Mammary epithelial cell (primary cell): ENCODE measurements at regions of chr3 and their contacts with region 1.

Region 1: GRCh38 chr3:182618085-182618732 is 175.1 kb upstream of the ATP11B start:
- DNase-seq: peak; percentile 57
- H3K4me3 ChIP-seq: no peak overlapping the region
- H3K27ac ChIP-seq: peak overlapping the region; percentile 81
- H3K4me1 ChIP-seq: peaks cover 18% of the 10 kb centered on the region
- H3K27me3 ChIP-seq: no peaks in the 10 kb centered on the region
- CTCF ChIP-seq: peak; percentile 70 to 74

Region 2: DNA sequence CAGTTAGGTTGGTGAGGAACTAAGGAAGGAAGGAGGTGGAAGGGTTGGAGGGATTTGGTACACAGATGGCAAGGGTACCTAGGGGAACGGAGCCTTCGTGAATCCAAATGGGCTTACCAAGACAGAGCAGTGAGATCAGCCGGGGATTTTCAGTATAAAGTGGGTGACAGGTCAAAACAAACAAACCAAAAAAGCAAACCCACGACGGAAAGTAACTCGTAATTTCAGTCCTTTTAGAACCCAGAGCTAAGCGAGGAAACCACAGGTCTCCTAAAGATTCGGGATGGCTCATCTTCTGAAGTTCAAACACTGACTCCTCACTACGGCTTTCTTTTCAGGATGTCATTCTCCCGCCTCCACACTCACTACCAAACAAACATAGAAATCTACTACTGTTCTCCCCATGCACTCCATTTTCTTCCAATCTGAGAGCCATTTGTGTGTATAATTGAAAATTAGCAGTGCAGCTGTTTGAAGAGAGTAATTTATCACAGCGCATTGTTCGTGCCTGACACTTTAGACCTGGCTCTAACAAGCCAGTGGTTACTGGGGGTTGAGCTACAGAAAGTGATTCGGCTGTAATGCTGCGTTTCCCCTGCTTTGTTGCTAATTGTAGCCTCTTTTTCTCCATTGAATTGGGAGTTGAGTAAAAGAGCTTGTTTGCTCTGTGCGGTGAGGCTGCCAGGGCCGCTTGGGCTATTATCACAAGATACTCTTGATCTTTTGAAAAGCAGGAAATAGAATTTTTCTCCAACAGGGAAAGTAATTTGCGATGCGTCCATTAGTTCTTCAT is 1874.2 kb before region 1 on chr3:
- CTCF ChIA-PET with region 1: no interaction called
- dilution Hi-C with region 1: no loop called
- in situ Hi-C with region 1: no loop called
- intact Hi-C with region 1: no loop called
- DNase-seq: no peak
- H3K4me3 ChIP-seq: no peak overlapping the region
- H3K27ac ChIP-seq: no peak overlapping the region
- H3K4me1 ChIP-seq: no peaks in the 10 kb centered on the region
- H3K27me3 ChIP-seq: no peaks in the 10 kb centered on the region
- CTCF ChIP-seq: no peak

Region 3: GRCh38 chr3:181700168-181701087 is 917.8 kb before region 1 on chr3:
- CTCF ChIA-PET with region 1: no interaction called
- dilution Hi-C with region 1: no loop called
- in situ Hi-C with region 1: loop called (anchors 10 kb)
- intact Hi-C with region 1: no loop called
- DNase-seq: peak; percentile 66
- H3K4me3 ChIP-seq: peak overlapping the region in 2 of 3 experiments; percentile 10 to 34
- H3K27ac ChIP-seq: no peak overlapping the region
- H3K4me1 ChIP-seq: peaks cover 28% of the 10 kb centered on the region
- H3K27me3 ChIP-seq: peaks cover 25% of the 10 kb centered on the region
- CTCF ChIP-seq: peak; percentile 87 to 88

Region 4: GRCh38 chr3:182182531-182182968 is 435.7 kb before region 1 on chr3:
- CTCF ChIA-PET with region 1: no interaction called
- dilution Hi-C with region 1: no loop called
- in situ Hi-C with region 1: no loop called
- intact Hi-C with region 1: loop called (anchors 5 kb)
- DNase-seq: peak; percentile 95
- H3K4me3 ChIP-seq: no peak overlapping the region
- H3K27ac ChIP-seq: no peak overlapping the region
- H3K4me1 ChIP-seq: peaks cover 28% of the 10 kb centered on the region
- H3K27me3 ChIP-seq: no peaks in the 10 kb centered on the region
- CTCF ChIP-seq: no peak

Region 5: DNA sequence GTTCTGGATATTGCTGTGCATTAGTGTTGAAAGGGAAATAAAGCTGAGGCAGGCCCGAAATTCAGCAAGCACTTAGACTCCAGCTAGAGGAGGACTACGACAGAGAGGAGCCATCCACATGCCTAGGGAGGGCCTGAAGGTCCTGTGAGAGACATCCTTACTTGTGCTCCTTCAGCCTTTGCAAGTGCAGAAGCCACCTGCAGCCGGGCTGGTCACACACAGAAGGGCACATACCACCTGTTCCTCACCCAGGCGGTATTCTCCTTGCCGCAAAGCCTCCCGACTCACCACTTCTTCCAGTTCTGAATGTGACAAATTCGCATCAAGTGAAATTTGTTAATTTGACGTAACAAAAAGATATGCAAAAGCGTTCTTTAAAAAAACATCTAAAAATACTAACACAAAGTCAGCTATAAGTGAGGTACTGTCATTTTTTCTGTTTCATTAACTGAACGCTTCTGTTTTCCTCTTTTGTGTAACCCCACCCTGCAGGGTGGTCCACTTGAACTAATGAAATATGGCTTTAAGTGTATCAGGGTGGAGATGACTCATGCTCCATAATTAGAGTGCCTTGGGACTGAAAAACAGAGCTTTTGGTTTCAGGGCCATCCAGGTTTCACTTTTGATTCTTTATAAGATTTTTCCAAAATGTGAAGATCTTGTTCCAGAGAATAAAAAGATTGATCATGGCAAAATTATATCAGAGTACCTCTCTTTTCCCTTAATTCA is 292.8 kb before region 1 on chr3:
- CTCF ChIA-PET with region 1: no interaction called
- dilution Hi-C with region 1: no loop called
- in situ Hi-C with region 1: no loop called
- intact Hi-C with region 1: loop called (anchors 5 kb)
- DNase-seq: peak; percentile 17
- H3K4me3 ChIP-seq: no peak overlapping the region
- H3K27ac ChIP-seq: no peak overlapping the region
- H3K4me1 ChIP-seq: peaks cover 8% of the 10 kb centered on the region
- H3K27me3 ChIP-seq: no peaks in the 10 kb centered on the region
- CTCF ChIP-seq: no peak

Region 6: GRCh38 chr3:182490596-182491491 is 127.4 kb before region 1 on chr3:
- CTCF ChIA-PET with region 1: no interaction called
- dilution Hi-C with region 1: no loop called
- in situ Hi-C with region 1: no loop called
- intact Hi-C with region 1: loop called (anchors 5 kb)
- DNase-seq: peak; percentile 31
- H3K4me3 ChIP-seq: no peak overlapping the region
- H3K27ac ChIP-seq: no peak overlapping the region
- H3K4me1 ChIP-seq: no peaks in the 10 kb centered on the region
- H3K27me3 ChIP-seq: no peaks in the 10 kb centered on the region
- CTCF ChIP-seq: peak; percentile 52 to 63